MCF 10A (cell line): ENCODE measurements at regions of chrX and their contacts with region 1.

Region 1: DNA sequence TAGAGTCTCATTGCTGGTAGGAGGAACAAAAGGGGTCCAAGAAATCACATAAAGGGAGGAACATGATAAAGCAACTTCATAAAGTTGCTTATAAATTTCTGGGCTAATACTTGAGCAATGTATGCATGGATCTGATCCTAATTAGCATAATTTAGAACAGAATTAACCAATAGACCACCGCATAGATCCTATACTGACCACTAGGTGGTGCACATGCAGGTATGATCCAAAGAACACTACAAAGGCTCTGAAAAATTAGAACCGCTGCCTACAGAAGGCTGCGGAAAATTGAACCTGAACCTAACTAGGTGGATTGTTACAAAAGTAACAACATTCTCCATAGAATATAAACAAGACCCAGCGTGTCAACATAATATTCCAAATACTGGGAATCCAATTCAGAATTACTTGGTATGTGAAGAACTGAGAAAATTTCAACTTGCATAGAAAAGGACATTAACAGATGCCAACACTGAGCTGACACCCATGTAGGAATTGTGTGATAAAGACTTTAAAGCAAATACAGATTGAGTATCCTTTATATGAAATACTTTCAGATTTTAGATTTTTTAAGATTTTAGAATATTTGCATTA is 23.3 kb downstream of the BRCC3 start:
- DNase-seq: peak; percentile 66
- H3K4me3 Mint-ChIP-seq: no peak overlapping the region
- H3K27ac Mint-ChIP-seq: no peak overlapping the region
- H3K4me1 Mint-ChIP-seq: no peaks in the 10 kb centered on the region
- H3K27me3 Mint-ChIP-seq: peaks cover 14% of the 10 kb centered on the region
- CTCF ChIP-seq: peak; percentile 57

Region 2: DNA sequence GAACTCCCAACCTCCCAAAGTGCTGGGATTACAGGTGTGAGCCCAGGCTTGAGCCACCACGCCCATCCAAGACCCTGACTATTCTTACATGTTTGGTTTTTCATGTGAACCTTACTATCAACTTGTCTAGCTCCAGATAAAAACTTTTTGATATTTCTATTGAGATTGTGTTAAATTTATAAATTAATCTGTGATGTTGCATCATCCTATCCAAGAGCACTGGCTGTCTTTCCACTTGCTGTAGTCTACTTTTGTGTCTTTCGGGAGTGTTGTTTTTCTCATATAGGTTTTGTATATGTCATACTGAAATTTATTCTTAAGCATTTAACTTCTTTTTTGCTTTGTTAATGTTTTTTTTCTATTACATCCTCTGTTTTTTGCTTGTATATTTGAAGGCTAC is 11.4 kb after region 1 on chrX:
- CTCF ChIA-PET with region 1: interaction called, 33 read pairs
- POLR2A ChIA-PET with region 1: interaction called, 3 read pairs
- intact Hi-C with region 1: no loop called
- DNase-seq: no peak
- H3K4me3 Mint-ChIP-seq: no peak overlapping the region
- H3K27ac Mint-ChIP-seq: no peak overlapping the region
- H3K4me1 Mint-ChIP-seq: peaks cover 10% of the 10 kb centered on the region
- H3K27me3 Mint-ChIP-seq: no peaks in the 10 kb centered on the region
- CTCF ChIP-seq: no peak

Region 3: GRCh38 chrX:155132110-155132509 is 37.5 kb after region 1 on chrX:
- CTCF ChIA-PET with region 1: interaction called, 3 read pairs
- POLR2A ChIA-PET with region 1: no interaction called
- intact Hi-C with region 1: loop called (anchors 1 kb)
- DNase-seq: no peak
- H3K4me3 Mint-ChIP-seq: no peak overlapping the region
- H3K27ac Mint-ChIP-seq: no peak overlapping the region
- H3K4me1 Mint-ChIP-seq: peaks cover 7% of the 10 kb centered on the region
- H3K27me3 Mint-ChIP-seq: no peaks in the 10 kb centered on the region
- CTCF ChIP-seq: no peak

Region 4: DNA sequence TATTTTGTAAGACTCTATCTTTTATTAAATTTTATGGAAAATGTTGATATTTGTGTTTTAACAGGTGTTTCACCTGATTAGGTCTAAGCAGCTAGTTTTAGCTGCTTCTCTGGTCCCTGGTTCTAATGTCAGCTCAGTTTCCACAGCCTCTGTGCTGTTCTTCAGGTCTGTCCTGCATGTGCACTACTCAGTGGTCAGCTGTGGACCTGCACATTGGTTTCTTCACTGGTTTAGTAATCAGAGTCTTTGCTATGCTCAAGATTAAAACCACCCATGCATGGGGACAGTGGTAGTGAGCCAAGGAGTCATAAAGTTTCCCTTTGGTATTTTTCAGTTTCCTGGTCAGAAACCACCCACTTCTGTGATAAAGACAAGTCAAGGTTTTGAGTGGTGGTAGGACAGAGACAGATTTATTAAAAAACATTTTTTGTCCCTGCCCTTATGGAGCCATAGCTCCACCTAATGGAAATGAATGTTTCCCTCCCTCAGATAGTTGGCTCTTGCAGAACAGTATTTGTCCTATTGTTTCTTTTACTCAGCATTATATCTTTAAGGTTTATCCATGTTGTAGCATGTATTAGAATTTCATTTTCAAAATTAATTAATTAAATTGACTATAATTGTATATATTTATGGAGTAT is 84.9 kb after region 1 on chrX:
- CTCF ChIA-PET with region 1: interaction called, 8 read pairs
- POLR2A ChIA-PET with region 1: no interaction called
- intact Hi-C with region 1: loop called (anchors 1 kb)
- DNase-seq: peak; percentile 15
- H3K4me3 Mint-ChIP-seq: no peak overlapping the region
- H3K27ac Mint-ChIP-seq: no peak overlapping the region
- H3K4me1 Mint-ChIP-seq: no peaks in the 10 kb centered on the region
- H3K27me3 Mint-ChIP-seq: no peaks in the 10 kb centered on the region
- CTCF ChIP-seq: no peak

Region 5: DNA sequence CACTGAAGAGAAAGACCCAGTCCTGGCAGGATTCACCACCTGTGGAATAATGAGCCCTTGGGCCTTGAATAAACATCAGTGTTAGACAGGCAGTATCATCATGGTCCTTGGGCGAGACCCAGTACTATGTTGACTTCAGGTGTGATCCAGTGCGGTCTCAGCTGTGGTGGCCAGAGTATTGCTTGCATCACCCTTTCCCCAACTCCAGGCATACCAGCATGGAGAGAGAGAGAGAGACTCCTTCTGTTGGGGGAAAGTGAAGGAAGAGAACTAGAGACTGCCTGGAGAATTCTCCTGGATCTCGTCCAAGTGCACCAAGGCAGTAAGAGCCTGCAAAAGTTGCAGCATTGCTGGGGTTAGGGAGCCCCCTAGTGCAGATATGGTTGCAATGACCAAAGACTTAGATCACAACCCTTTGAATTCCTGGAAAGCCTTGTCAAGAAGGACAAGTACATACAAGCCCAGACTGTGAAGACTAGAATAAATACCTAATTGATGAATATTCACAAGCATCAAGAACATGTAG is 725.5 kb after region 1 on chrX:
- CTCF ChIA-PET with region 1: no interaction called
- POLR2A ChIA-PET with region 1: no interaction called
- intact Hi-C with region 1: loop called (anchors 1 kb)
- DNase-seq: peak; percentile 91
- H3K4me3 Mint-ChIP-seq: no peak overlapping the region
- H3K27ac Mint-ChIP-seq: no peak overlapping the region
- H3K4me1 Mint-ChIP-seq: peaks cover 6% of the 10 kb centered on the region
- H3K27me3 Mint-ChIP-seq: no peaks in the 10 kb centered on the region
- CTCF ChIP-seq: peak; percentile 61